Dendritic cell treated with granulocyte-macrophage colony-stimulating factor and Interleukin-4, amounts not matched to agents 40 ng/mL and 50 ng/mL, for 4 days (primary cell): ENCODE measurements at regions of chr1 and their contacts with region 1.

Region 1: DNA sequence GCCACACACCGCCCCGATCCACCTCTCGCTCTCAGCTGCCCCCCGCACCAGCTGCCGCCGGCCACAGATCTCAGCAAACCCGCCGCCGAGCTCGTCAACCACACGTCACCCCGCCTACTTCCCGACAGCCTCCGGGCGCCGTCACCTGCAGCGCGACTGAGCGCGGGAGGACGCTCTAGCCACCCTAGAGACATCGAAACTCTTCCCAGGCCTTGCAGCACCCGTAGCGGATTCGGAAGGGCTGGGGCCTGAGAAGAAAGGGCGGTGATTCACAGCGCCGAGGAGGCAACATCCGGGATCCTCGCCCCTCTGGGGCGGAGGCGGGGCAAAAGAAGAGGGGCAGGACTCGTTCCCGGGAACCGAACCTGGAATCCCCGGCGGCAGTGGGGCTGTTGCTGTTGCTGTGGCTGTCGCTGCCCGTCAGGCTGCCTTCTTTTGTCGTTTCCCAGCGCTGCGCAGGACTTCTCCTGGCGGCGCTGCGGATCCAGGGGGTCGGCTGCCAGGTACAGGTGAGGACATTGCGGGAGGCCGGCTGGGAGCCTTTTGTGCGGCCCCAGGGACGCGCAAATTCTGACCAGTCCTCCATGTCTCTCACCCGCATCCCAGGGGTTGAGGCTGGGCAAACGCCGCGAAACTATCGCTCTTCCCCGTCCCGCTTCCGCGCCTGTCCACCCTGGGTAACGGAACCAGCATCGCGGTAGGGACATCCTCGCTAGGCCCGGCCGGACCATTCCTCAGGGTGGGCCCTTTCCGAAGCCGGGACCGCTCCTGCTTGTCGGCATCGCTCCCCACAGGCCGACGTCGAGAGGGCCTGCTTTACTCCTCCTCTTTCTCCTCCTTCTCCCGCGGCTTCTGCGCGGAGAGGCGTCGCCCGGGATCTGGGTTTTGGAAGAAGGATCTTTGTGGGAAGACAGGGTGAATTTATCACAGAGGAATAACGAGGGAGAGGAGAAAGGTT is at the starts of genes RO60 and UCHL5:
- H3K4me3 Mint-ChIP-seq: peak within 1 kb of the TSS; percentile 98
- H3K27ac Mint-ChIP-seq: peak within 1 kb of the TSS; percentile 97
- H3K4me1 Mint-ChIP-seq: peaks cover 39% of the 10 kb centered on the region
- H3K27me3 Mint-ChIP-seq: no peaks in the 10 kb centered on the region

Region 2: GRCh38 chr1:193104906-193105820 is 45.6 kb after region 1 on chr1 and contains the start of gene GLRX2:
- intact Hi-C with region 1: loop called (anchors 1 kb)
- H3K4me3 Mint-ChIP-seq: peak within 1 kb of the TSS; percentile 90
- H3K27ac Mint-ChIP-seq: peak within 1 kb of the TSS; percentile 93
- H3K4me1 Mint-ChIP-seq: peaks cover 24% of the 10 kb centered on the region
- H3K27me3 Mint-ChIP-seq: no peaks in the 10 kb centered on the region